Transverse colon (tissue), 4 donors: ENCODE measurements at regions of chr9 and their contacts with region 1.

Region 1: GRCh38 chr9:34675048-34675714 is 12.7 kb upstream of the CCL27 start:
- DNase-seq: peak; percentile 78
- H3K4me3 ChIP-seq: no peak overlapping the region
- H3K27ac ChIP-seq: no peak overlapping the region
- H3K4me1 ChIP-seq: no peaks in the 10 kb centered on the region
- H3K27me3 ChIP-seq: no peaks in the 10 kb centered on the region
- CTCF ChIP-seq: peak; percentile 44 to 67 (median 54)
- EP300 ChIP-seq: no peak
- POLR2A ChIP-seq: no peak

Region 2: GRCh38 chr9:34025062-34025461 is 650.1 kb before region 1 on chr9:
- in situ Hi-C with region 1: no loop called
- intact Hi-C with region 1: loop called (anchors 5 kb)
- DNase-seq: no peak
- H3K4me3 ChIP-seq: no peak overlapping the region
- H3K27ac ChIP-seq: no peak overlapping the region
- H3K4me1 ChIP-seq: peaks cover 0 to 3% (median 0%) of the 10 kb centered on the region in 4 donors
- H3K27me3 ChIP-seq: no peaks in the 10 kb centered on the region
- CTCF ChIP-seq: no peak
- EP300 ChIP-seq: no peak
- POLR2A ChIP-seq: no peak